ENCODE measurements at regions of chr11 and their contacts with region 1.

Region 1: GRCh38 chr11:77047007-77047927 is 13.1 kb downstream of the B3GNT6 start:
- DNase-seq: peak in 1 of 2 donors; percentile 93
- H3K4me3 ChIP-seq: peak overlapping the region; percentile 49 to 55
- H3K27ac ChIP-seq: peak overlapping the region in 1 of 2 donors; percentile 25
- H3K4me1 ChIP-seq: peaks cover 0 to 5% of the 10 kb centered on the region in 2 donors
- H3K27me3 ChIP-seq: no peaks in the 10 kb centered on the region
- CTCF ChIP-seq: peak; percentile 67 to 80 (median 71)

Region 2: DNA sequence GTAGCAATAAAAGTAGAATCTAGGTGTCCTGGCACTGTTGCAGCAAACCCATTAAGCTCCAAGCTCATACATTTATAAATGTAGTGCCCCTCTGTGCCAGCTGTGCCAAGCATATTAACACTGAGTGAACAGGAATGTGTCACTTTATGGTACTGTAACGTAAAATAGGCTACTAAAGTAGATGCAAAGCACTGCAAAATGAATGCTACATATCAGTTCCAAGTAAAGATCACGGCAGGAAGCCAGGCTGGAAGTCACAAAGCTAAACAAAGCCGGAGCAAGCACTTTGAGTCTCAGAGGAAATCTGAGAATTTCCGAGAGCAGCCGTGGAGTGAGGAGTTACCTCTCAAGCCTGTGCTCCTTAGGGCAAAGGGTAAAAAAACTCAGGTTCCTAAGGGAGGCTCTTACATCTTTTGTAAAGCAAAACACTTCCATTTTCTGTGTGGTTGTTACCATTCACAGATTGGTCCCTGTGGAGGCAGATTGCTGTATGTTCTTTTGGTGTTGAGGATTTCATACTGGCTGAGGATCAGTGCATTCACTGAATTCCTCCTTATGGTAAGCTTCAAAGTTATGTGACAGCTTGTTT is 926.7 kb before region 1 on chr11:
- intact Hi-C with region 1: no loop called
- DNase-seq: no peak
- H3K4me3 ChIP-seq: peak overlapping the region in 1 of 2 donors; percentile 24
- H3K27ac ChIP-seq: peak overlapping the region; percentile 31 to 51
- H3K4me1 ChIP-seq: peaks cover 0 to 14% of the 10 kb centered on the region in 2 donors
- H3K27me3 ChIP-seq: no peaks in the 10 kb centered on the region
- CTCF ChIP-seq: no peak

Region 3: GRCh38 chr11:76978818-76979217 is 68.4 kb before region 1 on chr11:
- intact Hi-C with region 1: no loop called
- DNase-seq: no peak
- H3K4me3 ChIP-seq: no peak overlapping the region
- H3K27ac ChIP-seq: peak overlapping the region; percentile 2 to 41
- H3K4me1 ChIP-seq: peaks cover 0 to 9% of the 10 kb centered on the region in 2 donors
- H3K27me3 ChIP-seq: no peaks in the 10 kb centered on the region
- CTCF ChIP-seq: no peak

Region 4: GRCh38 chr11:77066229-77067042 is 19.2 kb after region 1 on chr11 and contains the start of gene CAPN5:
- intact Hi-C with region 1: loop called (anchors 1 kb)
- DNase-seq: peak; percentile 58 to 96
- H3K4me3 ChIP-seq: peak within 1 kb of the TSS; percentile 80 to 84
- H3K27ac ChIP-seq: peak within 1 kb of the TSS; percentile 93
- H3K4me1 ChIP-seq: peaks cover 0 to 19% of the 10 kb centered on the region in 2 donors
- H3K27me3 ChIP-seq: no peaks in the 10 kb centered on the region
- CTCF ChIP-seq: peak; percentile 22 to 34 (median 29)
- total RNA-seq, gene CAPN5: 7.9 TPM

Region 5: DNA sequence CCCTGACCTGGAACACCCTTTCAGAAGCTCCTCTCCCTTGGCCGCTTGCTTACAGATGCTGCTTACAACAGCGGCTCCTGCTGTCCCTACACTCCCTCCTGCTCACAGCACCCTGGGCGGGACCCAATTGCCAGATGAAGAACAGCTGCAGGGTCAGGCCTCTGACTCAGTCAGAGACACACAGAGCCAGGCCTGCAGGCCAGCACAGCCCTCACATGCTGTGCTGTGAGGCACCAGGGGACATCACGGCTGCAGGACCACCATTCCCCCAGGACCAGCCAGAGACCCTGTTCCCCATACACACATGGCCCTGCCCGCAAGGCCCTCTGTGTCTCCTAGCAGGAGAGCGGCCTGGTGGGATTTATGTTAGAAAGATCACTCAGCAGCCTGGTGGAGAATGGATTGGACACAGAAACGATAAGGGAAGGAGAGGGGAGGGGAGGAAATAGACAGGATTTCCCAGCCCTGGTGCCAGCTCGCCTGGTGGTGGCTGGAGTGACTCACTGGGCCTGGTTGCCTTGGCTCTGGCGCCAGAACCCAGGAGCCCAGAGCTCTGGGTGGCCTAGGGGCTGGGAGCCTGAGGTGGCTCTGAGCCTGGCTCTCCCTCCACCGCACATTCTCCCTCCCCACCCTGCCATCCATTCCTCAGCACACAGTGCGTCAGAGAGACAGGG is 26.2 kb after region 1 on chr11:
- intact Hi-C with region 1: loop called (anchors 1 kb)
- DNase-seq: peak; percentile 80 to 95
- H3K4me3 ChIP-seq: peak overlapping the region in 1 of 2 donors; percentile 9
- H3K27ac ChIP-seq: peak overlapping the region; percentile 89 to 96
- H3K4me1 ChIP-seq: peaks cover 20 to 43% of the 10 kb centered on the region in 2 donors
- H3K27me3 ChIP-seq: no peaks in the 10 kb centered on the region
- CTCF ChIP-seq: peak; percentile 44 to 67 (median 48)

Region 6: DNA sequence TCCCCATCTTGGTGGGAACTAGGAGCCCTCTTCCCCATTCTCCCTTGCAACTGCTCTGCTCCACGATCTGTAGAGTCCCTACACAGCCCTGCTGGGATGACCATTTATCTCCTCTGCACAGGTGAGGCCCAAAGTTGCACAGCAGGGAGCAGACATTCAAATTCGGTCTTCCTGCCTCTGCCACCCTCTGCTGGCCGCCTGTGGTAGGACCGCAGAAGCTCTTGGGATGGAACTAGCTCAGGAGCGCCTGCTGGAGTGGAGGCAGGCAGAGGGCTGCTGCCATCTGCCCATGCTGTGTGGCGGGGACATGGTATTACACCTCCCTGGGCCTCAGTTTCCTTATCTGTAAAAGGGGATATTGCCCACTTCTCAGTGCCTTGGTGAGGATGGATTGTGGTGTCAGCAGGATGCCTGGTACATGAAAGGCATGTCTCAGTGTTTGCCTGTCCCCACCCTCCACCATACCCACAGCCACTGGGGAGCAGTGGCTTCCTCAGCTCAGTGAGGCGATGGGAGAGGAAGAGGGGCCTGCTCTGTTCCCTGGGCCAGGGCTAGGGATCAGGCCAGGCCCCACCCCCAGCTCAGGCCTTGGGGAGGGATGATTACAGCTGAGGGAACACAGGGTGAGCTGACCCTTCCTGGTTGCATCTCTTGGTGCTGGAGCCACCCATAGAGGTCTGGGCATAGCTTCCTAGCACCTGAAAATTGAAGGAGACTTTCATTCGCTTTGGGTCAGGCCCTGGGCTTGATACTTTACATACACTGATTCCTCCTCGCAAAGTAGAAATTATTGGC is 44.1 kb after region 1 on chr11:
- intact Hi-C with region 1: loop called (anchors 1 kb)
- DNase-seq: peak in 1 of 2 donors; percentile 88
- H3K4me3 ChIP-seq: no peak overlapping the region
- H3K27ac ChIP-seq: no peak overlapping the region
- H3K4me1 ChIP-seq: no peaks in the 10 kb centered on the region
- H3K27me3 ChIP-seq: no peaks in the 10 kb centered on the region
- CTCF ChIP-seq: peak; percentile 88 to 92 (median 92)

Region 7: DNA sequence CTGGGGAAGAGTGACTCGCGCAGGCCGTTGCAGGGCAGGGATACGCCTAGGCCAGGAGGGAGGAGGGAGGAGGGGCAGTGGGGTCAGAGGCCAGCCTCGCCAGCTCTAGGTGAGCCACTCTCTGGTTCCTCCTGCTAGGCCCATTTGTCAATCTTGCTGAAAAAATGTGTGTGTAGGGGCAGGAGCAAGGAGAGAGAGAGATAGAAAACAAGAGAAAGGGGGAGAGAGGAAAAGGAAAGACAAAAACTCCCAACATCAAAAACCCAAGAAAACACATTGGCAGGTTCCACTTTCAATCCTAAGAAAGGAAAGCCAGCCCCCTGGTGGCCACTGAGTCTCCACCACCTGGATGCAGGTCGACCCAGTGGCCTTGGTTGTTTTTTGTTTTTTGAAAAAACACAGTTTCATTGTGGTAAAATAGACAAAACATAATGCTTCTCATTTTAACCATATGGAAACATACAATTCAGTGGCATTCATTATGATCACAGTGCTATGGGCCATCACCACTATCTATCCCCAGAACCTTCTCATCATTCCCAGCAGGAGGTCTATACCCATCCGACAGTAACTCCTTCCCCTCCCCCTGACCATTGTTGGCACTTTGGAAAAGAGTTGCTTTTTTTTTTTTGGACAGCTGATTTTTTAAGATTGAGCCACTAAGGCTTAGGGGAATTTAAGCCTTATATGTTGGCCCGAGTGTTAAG is 66.3 kb after region 1 on chr11:
- intact Hi-C with region 1: loop called (anchors 5 kb)
- DNase-seq: no peak
- H3K4me3 ChIP-seq: no peak overlapping the region
- H3K27ac ChIP-seq: no peak overlapping the region
- H3K4me1 ChIP-seq: no peaks in the 10 kb centered on the region
- H3K27me3 ChIP-seq: no peaks in the 10 kb centered on the region
- CTCF ChIP-seq: peak in 1 of 3 experiments; percentile 39

Region 8: DNA sequence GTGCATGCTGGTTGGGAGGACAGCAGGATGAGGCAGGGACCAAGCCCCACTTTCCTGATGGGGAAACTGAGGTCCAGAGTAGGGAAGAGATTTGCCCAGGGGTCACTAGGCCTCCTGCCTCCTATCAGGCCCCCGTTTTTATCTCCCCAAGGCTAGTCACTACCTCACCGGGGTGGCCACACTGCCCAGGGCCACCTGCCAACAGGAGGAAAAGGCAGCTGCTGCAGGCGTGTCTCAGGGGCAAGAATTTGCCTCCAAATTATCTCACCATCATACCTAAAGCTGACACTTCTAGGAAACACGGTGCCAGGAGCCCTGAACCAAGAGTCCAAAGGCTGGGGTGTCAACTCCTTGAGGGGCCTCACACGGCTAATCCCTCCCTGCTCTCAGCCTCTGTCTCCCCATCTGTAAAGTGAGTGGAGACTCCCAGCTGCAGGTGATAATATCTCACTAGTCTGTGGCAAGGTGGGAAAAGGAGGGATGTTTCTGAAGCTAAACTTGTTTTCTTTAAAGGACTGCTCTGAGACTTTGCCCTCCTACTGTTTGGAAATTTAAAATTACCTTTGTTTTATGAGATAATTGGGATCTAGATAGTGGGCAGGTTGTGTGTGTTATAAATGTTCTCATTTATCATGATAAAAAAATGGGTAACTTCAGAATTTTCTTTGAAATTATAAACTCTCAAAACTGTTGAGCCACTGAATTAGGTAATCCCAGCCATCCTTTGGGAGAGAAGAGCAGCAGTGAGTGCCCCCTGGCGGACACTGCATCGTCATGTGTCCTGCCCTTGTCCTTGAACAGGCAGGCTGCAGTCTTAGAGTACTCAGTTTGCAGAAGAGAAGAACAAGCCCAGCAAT is 140.7 kb after region 1 on chr11:
- intact Hi-C with region 1: loop called (anchors 1 kb)
- DNase-seq: peak in 1 of 2 donors; percentile 83
- H3K4me3 ChIP-seq: no peak overlapping the region
- H3K27ac ChIP-seq: no peak overlapping the region
- H3K4me1 ChIP-seq: no peaks in the 10 kb centered on the region
- H3K27me3 ChIP-seq: no peaks in the 10 kb centered on the region
- CTCF ChIP-seq: peak; percentile 79 to 91 (median 81)

Region 9: DNA sequence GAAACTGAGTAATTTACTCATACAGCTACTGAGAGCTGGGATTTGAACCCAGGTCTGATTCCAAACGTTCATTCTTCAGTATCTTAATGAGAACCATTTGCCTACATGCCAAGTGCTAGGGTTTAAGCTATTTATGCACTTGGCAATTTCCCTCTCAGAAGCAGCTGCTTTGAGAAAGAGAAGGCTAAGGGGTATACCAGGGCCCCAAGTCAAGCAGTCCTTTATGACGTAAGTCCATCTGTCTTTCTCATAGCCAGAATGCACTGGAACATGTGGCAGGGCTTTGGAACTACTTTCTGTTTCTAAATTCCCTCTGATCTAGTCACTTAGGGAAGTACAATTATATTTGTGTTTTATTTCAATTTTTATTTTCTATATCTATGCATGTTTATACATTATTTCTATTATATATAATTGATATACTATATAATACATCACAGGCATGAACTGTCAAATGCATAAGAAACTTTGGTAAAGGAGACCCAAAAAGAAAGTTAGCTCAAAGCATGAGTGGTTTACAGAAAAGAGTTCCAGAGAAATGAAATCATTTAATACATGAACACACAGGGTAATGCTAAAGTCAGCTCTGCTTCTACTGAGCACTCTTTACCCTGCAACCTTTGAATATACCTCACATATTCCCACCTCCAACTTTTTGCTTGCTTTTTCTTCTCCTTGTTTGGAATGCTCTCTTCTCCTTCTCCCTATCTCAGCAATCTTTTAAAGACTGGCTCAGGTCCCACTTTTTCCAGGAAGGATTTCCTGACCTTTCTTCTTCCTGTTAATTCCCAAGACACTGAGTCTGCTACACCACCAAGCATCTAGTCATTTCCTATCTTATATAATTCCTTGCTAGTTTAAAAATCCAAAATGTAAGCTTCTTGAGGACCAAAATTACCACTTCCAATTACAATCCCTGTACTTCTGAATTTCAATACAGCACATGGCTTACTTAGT is 334.7 kb after region 1 on chr11:
- intact Hi-C with region 1: no loop called
- DNase-seq: no peak
- H3K4me3 ChIP-seq: no peak overlapping the region
- H3K27ac ChIP-seq: no peak overlapping the region
- H3K4me1 ChIP-seq: peaks cover 0 to 3% of the 10 kb centered on the region in 2 donors
- H3K27me3 ChIP-seq: no peaks in the 10 kb centered on the region
- CTCF ChIP-seq: no peak